A673 (cell line): ENCODE measurements at regions of chr19 and their contacts with region 1.

Region 1: DNA sequence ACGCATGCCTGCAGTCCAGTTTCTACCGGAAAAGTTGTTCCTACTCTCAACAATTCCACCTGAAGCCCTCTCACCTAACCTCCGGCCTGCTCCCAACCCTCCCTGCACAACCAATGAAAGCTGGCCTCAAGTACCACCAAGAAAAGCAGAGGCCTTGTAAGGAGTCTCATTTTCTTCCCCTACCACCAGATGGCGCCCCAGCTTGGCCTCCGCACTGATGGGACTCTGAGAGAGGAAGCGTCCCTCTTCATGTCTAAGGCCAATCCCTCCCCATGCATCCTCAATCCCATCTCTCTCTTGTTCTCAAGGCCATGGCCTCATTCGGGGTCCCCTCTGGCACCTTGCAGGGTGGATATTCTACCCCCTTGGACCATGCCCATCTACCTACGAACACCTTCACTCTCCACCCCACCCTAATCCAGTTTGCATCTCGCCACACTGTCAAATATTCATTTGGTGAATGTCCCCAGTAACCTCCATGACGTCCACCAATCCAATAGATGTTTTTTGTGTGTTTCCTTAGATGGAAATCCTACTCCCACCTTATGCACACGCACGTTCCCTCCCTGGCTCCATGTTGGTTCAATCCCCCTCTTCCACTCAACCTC is 412.8 kb downstream of the ZNF536 start:
- DNase-seq: peak; percentile 79
- H3K4me3 ChIP-seq: no peak overlapping the region
- H3K27ac ChIP-seq: no peak overlapping the region
- H3K4me1 ChIP-seq: peaks cover 17% of the 10 kb centered on the region
- H3K27me3 ChIP-seq: no peaks in the 10 kb centered on the region
- CTCF ChIP-seq: peak; percentile 88

Region 2: DNA sequence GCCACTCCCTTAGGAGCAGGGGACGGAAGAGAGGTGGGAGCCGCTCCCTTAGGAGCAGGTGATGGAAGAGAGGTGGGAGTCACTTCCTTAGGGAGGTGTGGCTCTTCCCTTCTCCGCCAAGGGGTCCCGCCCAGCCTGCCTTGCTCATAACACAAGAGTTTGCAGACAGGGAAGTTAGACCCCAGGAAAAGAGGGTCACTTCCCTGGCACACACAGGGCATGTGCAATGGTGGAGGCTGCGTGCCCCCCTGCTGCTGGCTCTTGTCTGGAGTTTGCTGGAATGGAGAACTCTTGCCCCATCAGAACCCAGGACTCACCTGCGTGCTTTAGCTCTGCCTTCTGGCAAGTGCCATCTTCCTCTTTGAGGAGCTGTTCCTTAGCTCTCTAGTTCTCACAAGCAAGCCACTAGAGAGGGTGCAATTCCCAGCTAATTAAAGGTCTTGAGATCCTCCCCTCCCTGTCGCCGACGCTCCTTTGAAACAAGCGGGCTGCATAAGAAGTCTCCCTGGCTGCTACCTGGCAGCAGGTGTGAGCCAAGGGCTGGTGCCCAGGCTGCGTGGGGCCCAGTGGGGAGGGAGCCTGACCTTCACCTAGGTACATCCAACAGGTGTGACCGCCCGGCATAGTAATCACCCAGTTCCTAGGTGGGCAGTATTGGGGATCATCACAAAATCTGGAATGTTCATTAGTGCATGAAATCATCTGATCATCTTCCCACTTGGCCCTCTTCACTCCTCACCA is 131.1 kb before region 1 on chr19:
- CTCF ChIA-PET with region 1: no interaction called
- POLR2A ChIA-PET with region 1: no interaction called
- intact Hi-C with region 1: no loop called
- DNase-seq: no peak
- H3K4me3 ChIP-seq: no peak overlapping the region
- H3K27ac ChIP-seq: no peak overlapping the region
- H3K4me1 ChIP-seq: no peaks in the 10 kb centered on the region
- H3K27me3 ChIP-seq: no peaks in the 10 kb centered on the region
- CTCF ChIP-seq: no peak

Region 3: DNA sequence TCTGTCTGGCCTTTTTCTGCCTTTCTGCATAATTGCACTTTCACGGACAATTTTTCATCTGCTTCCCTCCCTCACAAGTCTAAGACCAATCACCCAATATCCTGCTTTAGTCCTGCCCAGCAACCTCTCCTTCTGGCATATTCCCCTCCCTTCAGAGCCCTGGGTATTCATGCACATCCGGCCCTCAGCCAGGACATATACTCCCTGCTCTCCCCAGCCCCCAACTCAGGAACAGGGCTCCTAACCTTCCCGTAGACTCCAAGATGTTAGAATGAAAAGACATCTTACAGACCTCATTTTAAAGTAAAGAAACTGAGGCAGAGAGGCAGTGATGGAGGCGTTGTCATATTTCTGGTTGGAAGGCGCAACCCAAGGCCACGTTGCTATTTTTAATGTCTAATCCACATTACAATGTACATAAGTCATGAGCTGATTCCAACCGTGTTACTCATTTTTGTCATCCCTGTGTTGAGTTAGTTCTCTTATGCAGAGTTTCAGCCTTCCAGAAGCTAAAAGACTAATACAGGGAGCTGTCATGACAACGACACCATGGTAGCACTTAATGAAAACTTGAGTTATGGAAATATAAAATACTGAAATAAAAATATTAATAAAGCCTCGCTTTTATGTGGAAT is 355.0 kb after region 1 on chr19:
- CTCF ChIA-PET with region 1: no interaction called
- POLR2A ChIA-PET with region 1: no interaction called
- intact Hi-C with region 1: loop called (anchors 5 kb)
- DNase-seq: peak; percentile 9
- H3K4me3 ChIP-seq: no peak overlapping the region
- H3K27ac ChIP-seq: no peak overlapping the region
- H3K4me1 ChIP-seq: peaks cover 15% of the 10 kb centered on the region
- H3K27me3 ChIP-seq: no peaks in the 10 kb centered on the region
- CTCF ChIP-seq: no peak